AG04450 (cell line): ENCODE measurements at regions of chr4 and their contacts with region 1.

Region 1: DNA sequence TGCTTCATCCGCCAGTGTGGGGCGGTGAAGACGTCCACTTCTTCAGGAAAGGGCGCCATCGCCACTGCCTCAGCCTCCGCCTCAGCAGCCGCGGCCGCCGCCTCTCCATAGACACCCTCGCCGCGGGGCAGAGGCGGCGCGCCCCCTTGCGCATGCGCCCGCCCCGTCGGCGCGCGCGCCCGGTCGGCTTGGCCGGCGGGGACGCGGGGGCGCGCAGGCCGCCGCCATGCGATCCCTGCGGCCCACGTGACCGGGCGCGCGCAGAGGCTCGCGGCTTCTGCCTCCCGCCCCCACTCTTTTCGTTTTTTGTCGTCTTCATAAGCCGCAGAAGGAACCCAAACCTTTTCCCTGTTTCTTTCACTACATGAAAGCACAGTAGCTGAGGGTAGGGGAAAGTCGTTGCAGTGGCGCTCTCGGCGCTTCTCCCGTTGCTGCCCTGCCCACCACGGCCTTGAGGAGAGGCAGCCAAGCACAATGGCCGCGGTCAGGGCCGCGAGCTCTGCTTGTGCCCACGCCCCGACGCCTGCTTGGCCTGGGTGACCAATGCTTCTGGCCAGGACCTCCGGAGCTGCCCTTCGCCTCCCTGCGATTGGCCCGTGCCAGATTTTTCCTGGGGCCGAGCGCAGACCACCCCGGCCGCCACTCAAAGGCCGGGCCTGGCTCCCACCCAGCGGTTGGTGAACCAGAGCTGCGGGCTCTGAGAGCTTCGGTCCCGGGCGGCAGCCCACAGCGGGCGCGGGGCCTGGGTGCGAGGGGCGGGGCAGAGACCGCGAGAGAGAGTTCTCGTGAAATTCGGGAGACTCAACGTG is at the start of gene FBXL5:
- DNase-seq: peak; percentile 46
- H3K4me3 ChIP-seq: peak within 1 kb of the TSS; percentile 77
- H3K27ac ChIP-seq: peak within 1 kb of the TSS; percentile 97
- H3K27me3 ChIP-seq: no peaks in the 10 kb centered on the region
- CTCF ChIP-seq: no peak
- polyA plus RNA-seq, gene FBXL5: 40.4 and 56.4 TPM in 2 replicates

Region 2: DNA sequence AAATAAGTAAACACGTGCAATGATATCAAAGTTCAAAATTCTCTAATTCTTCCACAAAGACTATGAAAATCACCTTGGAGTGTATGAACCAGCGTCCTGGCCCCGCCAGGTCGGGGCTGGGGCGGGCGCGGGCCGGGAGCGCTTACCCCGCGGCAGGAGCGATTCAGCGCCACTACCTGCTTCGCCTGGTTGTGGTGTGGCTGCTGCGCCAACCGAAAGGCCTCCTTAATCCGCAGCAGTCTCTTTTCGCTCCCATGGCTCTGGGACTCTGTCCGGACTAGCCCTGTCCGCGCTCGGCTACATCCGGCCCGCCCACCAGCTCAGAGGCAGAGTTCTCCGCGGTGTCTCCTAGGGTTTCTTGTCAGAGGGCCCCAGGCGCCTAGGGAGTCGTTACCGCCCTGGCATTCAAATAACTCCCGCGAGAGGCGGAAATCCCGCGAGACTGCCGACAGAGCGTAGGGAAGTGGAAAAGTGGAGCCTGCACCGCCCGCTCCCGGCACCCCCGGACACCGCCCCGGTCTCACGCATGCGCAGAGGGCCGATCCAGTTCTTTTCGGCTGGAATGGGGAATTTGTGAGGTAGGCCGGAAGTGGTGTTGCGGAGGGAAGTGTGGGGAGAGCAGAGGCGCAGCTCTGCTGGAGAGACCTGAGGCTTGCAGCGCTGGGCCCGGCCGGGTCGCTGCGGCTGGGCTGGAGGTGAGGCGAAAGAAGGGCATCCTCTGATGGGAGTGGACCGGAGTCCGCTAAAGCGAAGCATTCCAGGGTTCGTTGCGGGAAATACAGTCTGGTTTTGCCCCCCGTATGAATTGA is 26.0 kb after region 1 on chr4 and contains the start of gene FAM200B:
- CTCF ChIA-PET with region 1: interaction called, 4 read pairs
- POLR2A ChIA-PET with region 1: interaction called, 25 read pairs
- DNase-seq: peak; percentile 96
- H3K4me3 ChIP-seq: peak within 1 kb of the TSS; percentile 90
- H3K27ac ChIP-seq: peak within 1 kb of the TSS; percentile 92
- H3K27me3 ChIP-seq: no peaks in the 10 kb centered on the region
- CTCF ChIP-seq: 0 out of 2 replicates have a peak, but pooled peaks have one; percentile 5
- polyA plus RNA-seq, gene FAM200B: 31.6 and 47.3 TPM in 2 replicates